Psoas muscle (tissue), 8 donors: ENCODE measurements at regions of chr1 and their contacts with region 1.

Region 1: GRCh38 chr1:91473566-91473965 is 27.1 kb upstream of the CDC7 start:
- DNase-seq: no peak
- ATAC-seq: no peak
- H3K4me3 ChIP-seq: no peak overlapping the region
- H3K27ac ChIP-seq: no peak overlapping the region
- H3K4me1 ChIP-seq: no peaks in the 10 kb centered on the region
- H3K27me3 ChIP-seq: no peaks in the 10 kb centered on the region
- CTCF ChIP-seq: no peak

Region 2: DNA sequence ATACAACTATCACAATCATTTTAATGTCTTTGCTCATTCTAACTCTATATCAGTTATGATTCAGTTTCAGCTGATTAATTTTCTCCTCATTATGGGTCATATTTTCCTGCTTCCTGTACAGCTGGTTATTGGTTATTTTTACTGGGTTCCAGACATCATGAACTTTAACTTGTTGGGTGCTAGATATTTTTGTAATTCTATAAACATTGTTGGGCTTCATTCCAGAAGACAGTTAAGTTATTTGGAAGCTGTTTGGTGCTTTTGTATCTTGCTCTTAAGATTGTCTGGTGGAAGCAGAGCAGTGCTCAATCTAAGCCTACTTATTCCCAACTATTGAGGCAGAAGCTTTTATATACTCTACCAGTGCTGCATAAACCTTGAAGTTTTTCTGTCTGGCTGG is 34.5 kb before region 1 on chr1:
- intact Hi-C with region 1: loop called in 1 of 2 experiments (anchors 5 kb)
- DNase-seq: no peak
- ATAC-seq: no peak
- H3K4me3 ChIP-seq: no peak overlapping the region
- H3K27ac ChIP-seq: no peak overlapping the region
- H3K4me1 ChIP-seq: no peaks in the 10 kb centered on the region
- H3K27me3 ChIP-seq: no peaks in the 10 kb centered on the region
- CTCF ChIP-seq: no peak

Region 3: GRCh38 chr1:91450260-91450659 is 23.3 kb before region 1 on chr1:
- intact Hi-C with region 1: no loop called
- DNase-seq: no peak
- ATAC-seq: no peak
- H3K4me3 ChIP-seq: no peak overlapping the region
- H3K27ac ChIP-seq: no peak overlapping the region
- H3K4me1 ChIP-seq: no peaks in the 10 kb centered on the region
- H3K27me3 ChIP-seq: no peaks in the 10 kb centered on the region
- CTCF ChIP-seq: no peak

Region 4: DNA sequence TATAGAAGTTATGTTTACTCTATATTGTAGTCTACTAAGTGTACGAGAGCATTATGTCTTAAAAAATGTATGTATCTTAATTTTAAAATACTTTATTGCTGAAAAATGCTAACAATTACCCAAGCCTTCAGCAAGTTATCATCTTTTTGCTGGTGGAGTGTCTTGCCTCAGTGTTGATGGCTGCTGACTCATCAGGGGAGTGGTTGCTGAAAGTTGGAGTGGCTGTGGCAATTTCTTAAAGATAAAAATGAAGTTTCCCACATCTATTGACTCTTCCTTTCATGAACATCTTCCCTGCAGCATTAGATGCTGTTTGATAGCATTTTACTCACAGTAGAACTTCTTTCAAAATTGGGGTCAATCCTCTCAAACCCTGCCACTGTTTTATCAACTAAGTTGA is 122.9 kb after region 1 on chr1:
- intact Hi-C with region 1: no loop called
- DNase-seq: no peak
- ATAC-seq: no peak
- H3K4me3 ChIP-seq: no peak overlapping the region
- H3K27ac ChIP-seq: no peak overlapping the region
- H3K4me1 ChIP-seq: peaks cover 2% of the 10 kb centered on the region
- H3K27me3 ChIP-seq: no peaks in the 10 kb centered on the region
- CTCF ChIP-seq: no peak

Region 5: DNA sequence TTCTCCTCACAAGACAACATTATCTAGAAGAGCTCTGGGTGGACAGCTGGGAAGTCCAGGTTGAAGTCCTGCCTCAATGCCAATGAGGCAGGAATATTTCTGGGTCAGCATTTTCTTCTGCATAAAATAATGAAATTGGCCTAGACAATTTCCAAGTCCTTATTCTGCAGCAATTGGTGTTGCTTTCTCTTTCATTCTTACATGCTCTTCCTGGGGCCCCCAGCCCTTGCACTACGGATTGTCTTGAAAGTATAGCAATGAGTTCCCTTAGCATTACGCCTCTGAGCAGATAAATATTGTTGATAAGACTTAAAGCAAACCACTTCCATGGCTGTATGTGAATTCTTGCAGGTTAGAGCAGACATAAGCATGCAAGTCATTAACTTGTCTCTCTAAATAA is 223.8 kb after region 1 on chr1:
- intact Hi-C with region 1: no loop called
- DNase-seq: no peak
- ATAC-seq: no peak
- H3K4me3 ChIP-seq: no peak overlapping the region
- H3K27ac ChIP-seq: no peak overlapping the region
- H3K4me1 ChIP-seq: peaks cover 19% of the 10 kb centered on the region
- H3K27me3 ChIP-seq: no peaks in the 10 kb centered on the region
- CTCF ChIP-seq: no peak